ENCODE measurements at regions of chr5 and their contacts with region 1.

Region 1: GRCh38 chr5:127030259-127031146 is at the start of gene MARCHF3:
- DNase-seq: peak; percentile 91 to 98 (median 94)
- ATAC-seq: peak; percentile 98
- H3K4me3 ChIP-seq: peak within 1 kb of the TSS; percentile 79
- H3K4me3 Mint-ChIP-seq: peak within 1 kb of the TSS; percentile 83 to 96 (median 92)
- H3K27ac ChIP-seq: peak within 1 kb of the TSS; percentile 78
- H3K27ac Mint-ChIP-seq: peak within 1 kb of the TSS; percentile 42 to 93 (median 82)
- H3K4me1 ChIP-seq: peaks cover 0 to 10% of the 10 kb centered on the region in 2 donors
- H3K4me1 Mint-ChIP-seq: peaks cover 17 to 38% (median 28%) of the 10 kb centered on the region in 7 donors
- H3K27me3 ChIP-seq: no peaks in the 10 kb centered on the region
- H3K27me3 Mint-ChIP-seq: peaks cover 0 to 56% (median 0%) of the 10 kb centered on the region in 5 donors
- total RNA-seq, gene MARCHF3: 3.1 to 15.4 (median 13.0) TPM

Region 2: GRCh38 chr5:126852091-126852571 is 178.4 kb before region 1 on chr5:
- CTCF ChIA-PET with region 1: no interaction called
- POLR2A ChIA-PET with region 1: interaction called, 17 read pairs
- intact Hi-C with region 1: loop called (anchors 1 to 2 kb)
- DNase-seq: peak in 7 of 9 donors; percentile 38 to 72 (median 63)
- ATAC-seq: peak; percentile 81
- H3K4me3 ChIP-seq: peak overlapping the region; percentile 13
- H3K4me3 Mint-ChIP-seq: peak overlapping the region; percentile 71 to 91 (median 84)
- H3K27ac ChIP-seq: peak overlapping the region; percentile 67
- H3K27ac Mint-ChIP-seq: peak overlapping the region; percentile 95 to 99 (median 99)
- H3K4me1 ChIP-seq: peaks cover 12 to 33% of the 10 kb centered on the region in 2 donors
- H3K4me1 Mint-ChIP-seq: peaks cover 23 to 76% (median 67%) of the 10 kb centered on the region in 7 donors
- H3K27me3 ChIP-seq: no peaks in the 10 kb centered on the region
- H3K27me3 Mint-ChIP-seq: no peaks in the 10 kb centered on the region

Region 3: DNA sequence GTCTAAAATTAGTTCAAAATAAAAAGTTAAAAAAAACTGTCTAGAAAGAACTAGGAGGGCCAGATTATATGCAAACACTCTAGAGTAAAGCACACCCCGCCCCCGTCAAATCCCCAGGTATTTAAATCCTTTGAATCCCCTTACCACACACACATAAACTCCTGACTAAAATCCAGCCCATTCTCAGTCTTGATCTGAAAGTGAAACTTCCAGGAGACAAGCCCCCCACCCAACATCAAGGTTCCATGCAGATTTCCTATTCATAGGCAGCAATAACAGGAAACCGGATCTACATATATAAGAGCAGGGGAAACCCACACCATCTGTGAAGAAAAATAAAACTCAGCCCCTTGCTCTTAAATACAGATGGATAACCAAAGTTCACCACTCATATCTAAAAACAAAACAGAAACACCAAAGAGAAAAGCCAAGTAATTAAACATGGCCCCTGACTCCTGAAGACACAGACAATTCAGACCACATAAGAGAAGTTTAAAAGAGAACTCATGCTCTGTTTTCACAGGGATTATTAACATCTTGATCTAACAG is 42.4 kb before region 1 on chr5:
- CTCF ChIA-PET with region 1: interaction called, 7 read pairs
- POLR2A ChIA-PET with region 1: interaction called, 4 read pairs
- intact Hi-C with region 1: loop called (anchors 1 kb)
- DNase-seq: peak in 8 of 9 donors; percentile 30 to 81 (median 72)
- ATAC-seq: peak; percentile 94
- H3K4me3 ChIP-seq: no peak overlapping the region
- H3K4me3 Mint-ChIP-seq: peak overlapping the region; percentile 59 to 85 (median 76)
- H3K27ac ChIP-seq: peak overlapping the region; percentile 74
- H3K27ac Mint-ChIP-seq: peak overlapping the region; percentile 79 to 99 (median 94)
- H3K4me1 ChIP-seq: peaks cover 0 to 23% of the 10 kb centered on the region in 2 donors
- H3K4me1 Mint-ChIP-seq: peaks cover 24 to 78% (median 53%) of the 10 kb centered on the region in 7 donors
- H3K27me3 ChIP-seq: no peaks in the 10 kb centered on the region
- H3K27me3 Mint-ChIP-seq: no peaks in the 10 kb centered on the region

Region 4: DNA sequence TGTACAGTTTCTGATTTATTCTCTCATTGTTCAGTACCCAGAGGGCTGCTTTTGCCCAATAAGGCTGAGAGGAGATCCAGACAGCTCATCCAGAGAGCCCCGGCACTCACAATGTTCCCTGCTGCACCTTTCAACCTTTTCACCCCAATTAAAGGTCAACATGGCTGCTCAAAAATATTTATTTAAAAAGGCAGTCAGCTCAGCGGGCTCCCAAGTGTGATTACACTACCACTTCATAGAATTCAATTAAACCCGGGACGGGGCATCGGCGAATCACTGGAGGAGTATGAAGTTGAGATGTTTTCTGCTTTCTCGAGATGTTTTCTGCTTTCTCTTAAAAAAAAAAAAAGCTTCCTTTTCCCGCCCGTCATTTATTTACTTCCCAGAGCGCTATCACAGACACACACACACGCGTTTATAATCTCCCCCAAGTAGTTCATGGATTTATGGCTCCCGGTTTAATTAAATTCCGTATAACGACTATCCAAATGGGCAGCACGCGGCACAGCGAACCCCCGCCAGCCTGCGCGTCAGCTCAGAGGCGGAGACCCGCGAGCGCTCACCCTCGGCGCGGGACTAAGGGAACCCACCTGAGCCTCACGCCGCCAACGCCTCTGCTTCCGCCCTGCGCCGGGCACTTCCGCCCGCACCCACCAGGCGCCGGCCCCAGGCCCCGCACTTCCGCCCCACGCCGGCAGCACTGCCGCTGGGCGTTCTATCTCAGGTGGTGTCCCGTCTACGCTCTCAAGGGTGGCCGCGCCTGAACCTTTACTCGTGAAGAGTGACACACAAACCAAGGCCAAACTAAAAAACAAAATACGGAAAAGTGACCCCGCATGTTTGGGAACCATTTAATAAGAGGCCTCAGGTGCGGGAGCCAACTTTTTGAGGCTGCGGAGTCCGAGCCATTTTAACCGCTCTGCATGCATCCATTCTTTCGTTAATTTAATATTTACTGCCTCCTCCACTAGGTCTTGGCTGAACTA is 42.7 kb after region 1 on chr5 and contains the start of gene C5orf63:
- CTCF ChIA-PET with region 1: no interaction called
- POLR2A ChIA-PET with region 1: interaction called, 4 read pairs
- intact Hi-C with region 1: loop called (anchors 1 kb)
- DNase-seq: peak; percentile 41 to 78 (median 69)
- ATAC-seq: peak; percentile 91
- H3K4me3 ChIP-seq: peak within 1 kb of the TSS; percentile 83
- H3K4me3 Mint-ChIP-seq: peak within 1 kb of the TSS; percentile 89 to 100 (median 92)
- H3K27ac ChIP-seq: peak within 1 kb of the TSS; percentile 69
- H3K27ac Mint-ChIP-seq: peak within 1 kb of the TSS; percentile 74 to 98 (median 93)
- H3K4me1 ChIP-seq: peaks cover 8 to 10% of the 10 kb centered on the region in 2 donors
- H3K4me1 Mint-ChIP-seq: peaks cover 17 to 39% (median 29%) of the 10 kb centered on the region in 7 donors
- H3K27me3 ChIP-seq: no peaks in the 10 kb centered on the region
- H3K27me3 Mint-ChIP-seq: no peaks in the 10 kb centered on the region
- total RNA-seq, gene C5orf63: 9.2 to 20.7 (median 11.9) TPM

Region 5: GRCh38 chr5:127313847-127314473 is 283.5 kb after region 1 on chr5:
- CTCF ChIA-PET with region 1: no interaction called
- POLR2A ChIA-PET with region 1: no interaction called
- intact Hi-C with region 1: loop called in 1 of 2 experiments (anchors 2 kb)
- DNase-seq: peak; percentile 12 to 68 (median 50)
- ATAC-seq: peak; percentile 81
- H3K4me3 ChIP-seq: no peak overlapping the region
- H3K4me3 Mint-ChIP-seq: peak overlapping the region in 1 of 10 donors; percentile 2
- H3K27ac ChIP-seq: no peak overlapping the region
- H3K27ac Mint-ChIP-seq: no peak overlapping the region
- H3K4me1 ChIP-seq: no peaks in the 10 kb centered on the region
- H3K4me1 Mint-ChIP-seq: peaks cover 0 to 7% (median 0%) of the 10 kb centered on the region in 7 donors
- H3K27me3 ChIP-seq: no peaks in the 10 kb centered on the region
- H3K27me3 Mint-ChIP-seq: peaks cover 0 to 32% (median 4%) of the 10 kb centered on the region in 5 donors